Mammary epithelial cell (primary cell): ENCODE measurements at regions of chr3 and their contacts with region 1.

Region 1: DNA sequence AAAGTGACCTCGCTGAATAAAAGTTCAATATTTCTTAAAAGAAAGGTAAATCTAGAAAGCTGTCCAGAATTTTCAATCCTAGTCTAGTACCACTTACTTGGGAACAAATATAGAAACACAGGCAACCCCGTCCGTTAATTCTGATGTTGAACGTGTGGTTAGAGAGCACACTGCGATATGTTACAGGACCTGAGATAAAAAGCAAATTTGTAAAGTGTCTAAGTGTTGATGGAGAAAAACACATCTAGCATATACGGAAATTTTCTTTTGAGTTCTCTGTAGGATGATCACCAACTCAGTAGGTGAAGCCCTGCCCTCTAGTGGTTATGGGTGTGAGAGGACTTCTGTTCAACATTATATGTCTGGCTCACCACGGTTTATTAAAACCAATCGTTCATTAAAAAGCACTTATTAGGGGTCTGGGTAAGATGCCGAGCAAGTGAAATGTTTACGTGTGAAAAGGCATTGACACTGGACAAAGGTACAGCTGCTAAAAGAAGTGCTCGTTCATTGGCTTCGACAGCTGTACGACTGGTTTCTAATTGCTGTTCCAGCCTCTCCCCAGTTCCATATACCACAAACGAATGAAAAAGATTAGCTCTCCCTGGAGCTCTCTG is 1.0 kb upstream of the ATP2C1 start:
- DNase-seq: peak; percentile 74
- H3K4me3 ChIP-seq: peak overlapping the region; percentile 51 to 79 (median 77)
- H3K27ac ChIP-seq: peak overlapping the region; percentile 89
- H3K4me1 ChIP-seq: peaks cover 13% of the 10 kb centered on the region
- H3K27me3 ChIP-seq: no peaks in the 10 kb centered on the region
- CTCF ChIP-seq: peak; percentile 86 to 97

Region 2: GRCh38 chr3:130276203-130276803 is 616.6 kb before region 1 on chr3:
- CTCF ChIA-PET with region 1: no interaction called
- dilution Hi-C with region 1: no loop called
- in situ Hi-C with region 1: no loop called
- intact Hi-C with region 1: loop called (anchors 10 kb)
- DNase-seq: peak; percentile 44
- H3K4me3 ChIP-seq: no peak overlapping the region
- H3K27ac ChIP-seq: no peak overlapping the region
- H3K4me1 ChIP-seq: no peaks in the 10 kb centered on the region
- H3K27me3 ChIP-seq: peaks cover 3% of the 10 kb centered on the region
- CTCF ChIP-seq: peak; percentile 94 to 97

Region 3: DNA sequence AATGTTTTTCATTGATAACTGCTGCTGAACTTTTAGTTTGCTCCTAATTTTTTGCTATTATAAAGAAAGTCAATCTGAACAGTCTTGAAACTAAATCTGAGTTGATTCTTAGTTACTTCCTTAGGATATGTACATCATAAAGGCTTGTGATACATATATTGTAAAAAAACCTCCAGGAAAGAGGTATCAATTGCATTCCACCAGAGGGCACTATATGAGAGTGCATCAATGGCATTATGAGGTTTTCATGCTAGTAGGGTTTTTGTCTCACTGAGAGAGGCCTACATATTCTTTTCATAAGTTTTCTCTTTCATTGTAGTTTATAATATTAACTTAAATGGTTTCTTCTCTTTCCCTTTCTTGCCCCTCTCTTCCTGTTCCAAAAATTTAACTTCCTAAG is 193.1 kb before region 1 on chr3:
- CTCF ChIA-PET with region 1: no interaction called
- dilution Hi-C with region 1: no loop called
- in situ Hi-C with region 1: no loop called
- intact Hi-C with region 1: loop called (anchors 1 kb)
- DNase-seq: peak; percentile 31
- H3K4me3 ChIP-seq: no peak overlapping the region
- H3K27ac ChIP-seq: no peak overlapping the region
- H3K4me1 ChIP-seq: no peaks in the 10 kb centered on the region
- H3K27me3 ChIP-seq: no peaks in the 10 kb centered on the region
- CTCF ChIP-seq: peak; percentile 64 to 67

Region 4: DNA sequence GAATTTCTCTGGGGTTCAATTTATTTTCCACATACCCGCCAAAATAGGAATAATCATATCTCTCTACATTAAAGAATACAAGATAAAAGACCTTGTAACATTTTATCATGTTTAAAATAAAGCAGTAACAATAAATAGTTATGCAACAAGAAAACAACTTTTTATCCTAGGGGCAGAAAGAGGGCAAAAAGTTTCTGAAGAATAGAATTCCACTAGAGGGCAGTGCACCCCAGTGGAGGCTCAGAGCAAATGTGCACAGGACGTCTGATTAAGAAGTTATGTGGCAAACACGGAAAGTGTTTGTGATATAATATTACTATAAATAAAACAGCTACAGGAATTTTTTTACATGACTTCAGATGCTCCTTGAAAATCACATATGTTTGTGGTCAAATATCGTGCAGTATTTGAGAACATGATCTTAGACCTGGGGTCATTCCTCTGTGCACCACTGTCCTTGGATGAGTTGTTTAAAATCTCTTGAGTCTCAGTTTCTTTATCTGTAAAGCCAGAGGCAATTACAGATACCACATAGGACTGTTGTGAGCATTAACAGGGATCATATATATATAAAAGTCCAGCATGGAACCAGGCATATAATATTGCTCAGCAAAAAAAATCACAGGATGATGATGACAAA is 133.0 kb before region 1 on chr3:
- CTCF ChIA-PET with region 1: interaction called, 15 read pairs
- dilution Hi-C with region 1: no loop called
- in situ Hi-C with region 1: loop called (anchors 5 kb)
- intact Hi-C with region 1: loop called (anchors 1 kb)
- DNase-seq: peak; percentile 62
- H3K4me3 ChIP-seq: peak overlapping the region in 1 of 3 experiments; percentile 23
- H3K27ac ChIP-seq: peak overlapping the region; percentile 9
- H3K4me1 ChIP-seq: peaks cover 16% of the 10 kb centered on the region
- H3K27me3 ChIP-seq: no peaks in the 10 kb centered on the region
- CTCF ChIP-seq: peak; percentile 75 to 83

Region 5: GRCh38 chr3:130820976-130821375 is 71.9 kb before region 1 on chr3:
- CTCF ChIA-PET with region 1: no interaction called
- dilution Hi-C with region 1: no loop called
- in situ Hi-C with region 1: no loop called
- intact Hi-C with region 1: no loop called
- DNase-seq: peak; percentile 83
- H3K4me3 ChIP-seq: no peak overlapping the region
- H3K27ac ChIP-seq: no peak overlapping the region
- H3K4me1 ChIP-seq: peaks cover 8% of the 10 kb centered on the region
- H3K27me3 ChIP-seq: no peaks in the 10 kb centered on the region
- CTCF ChIP-seq: no peak

Region 6: DNA sequence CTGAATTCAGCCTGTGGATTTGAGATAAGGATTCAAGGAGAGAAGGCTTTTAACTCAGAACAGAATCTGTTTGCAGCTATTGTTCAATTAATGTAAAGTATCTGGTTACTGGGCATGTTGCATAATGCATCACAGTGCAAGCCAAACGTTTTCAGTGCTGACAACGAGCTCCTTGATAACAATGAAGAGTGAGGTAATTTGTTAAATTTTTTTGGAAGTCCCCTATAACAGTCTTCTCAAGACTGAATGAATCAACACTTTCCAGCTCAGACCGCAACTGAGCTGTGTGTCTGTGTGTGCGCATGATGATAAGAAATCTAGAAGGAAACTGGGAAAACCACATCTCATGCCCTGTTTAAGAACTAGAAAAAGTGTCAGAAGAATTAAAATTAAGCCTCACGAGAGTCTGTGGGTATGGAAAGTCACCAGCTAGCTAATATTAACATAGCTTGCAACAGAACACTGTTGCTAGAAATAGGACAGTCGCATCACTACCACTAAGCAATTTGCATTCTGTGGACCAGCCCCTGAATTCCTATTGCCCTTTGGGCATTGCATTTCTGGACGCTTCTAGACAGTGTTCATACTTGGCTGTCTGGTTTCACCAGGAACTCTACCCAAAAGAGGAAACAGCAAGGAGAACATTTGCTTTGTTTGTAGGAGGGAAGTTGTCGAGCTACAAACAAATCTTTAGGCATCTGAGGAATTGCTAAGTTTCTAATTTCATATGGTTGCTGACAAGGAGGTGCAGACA is 42.6 kb before region 1 on chr3:
- CTCF ChIA-PET with region 1: no interaction called
- dilution Hi-C with region 1: no loop called
- in situ Hi-C with region 1: no loop called
- intact Hi-C with region 1: loop called (anchors 2 kb)
- DNase-seq: peak; percentile 98
- H3K4me3 ChIP-seq: peak overlapping the region; percentile 29 to 50 (median 36)
- H3K27ac ChIP-seq: peak overlapping the region; percentile 98
- H3K4me1 ChIP-seq: peaks cover 31% of the 10 kb centered on the region
- H3K27me3 ChIP-seq: no peaks in the 10 kb centered on the region
- CTCF ChIP-seq: no peak

Region 7: GRCh38 chr3:130935761-130936492 is 43.1 kb after region 1 on chr3:
- CTCF ChIA-PET with region 1: no interaction called
- dilution Hi-C with region 1: no loop called
- in situ Hi-C with region 1: no loop called
- intact Hi-C with region 1: no loop called
- DNase-seq: peak; percentile 65
- H3K4me3 ChIP-seq: no peak overlapping the region
- H3K27ac ChIP-seq: no peak overlapping the region
- H3K4me1 ChIP-seq: peaks cover 10% of the 10 kb centered on the region
- H3K27me3 ChIP-seq: no peaks in the 10 kb centered on the region
- CTCF ChIP-seq: no peak

Region 8: DNA sequence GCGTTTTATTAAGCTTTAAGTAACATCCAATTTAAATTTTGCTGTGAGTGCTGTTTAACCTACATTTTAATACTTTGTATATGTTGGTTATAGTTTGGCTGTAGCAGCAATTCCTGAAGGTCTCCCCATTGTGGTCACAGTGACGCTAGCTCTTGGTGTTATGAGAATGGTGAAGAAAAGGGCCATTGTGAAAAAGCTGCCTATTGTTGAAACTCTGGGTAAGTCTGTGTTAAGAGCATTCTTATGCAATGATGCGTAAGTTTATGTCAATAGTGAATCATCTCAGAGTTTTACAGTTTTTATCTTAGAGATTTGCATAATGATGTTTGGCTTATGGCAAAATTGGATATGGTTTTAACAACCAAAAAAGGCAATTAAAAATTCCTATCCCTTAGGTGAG is 71.0 kb after region 1 on chr3:
- CTCF ChIA-PET with region 1: no interaction called
- dilution Hi-C with region 1: no loop called
- in situ Hi-C with region 1: no loop called
- intact Hi-C with region 1: loop called (anchors 2 kb)
- DNase-seq: peak; percentile 97
- H3K4me3 ChIP-seq: no peak overlapping the region
- H3K27ac ChIP-seq: peak overlapping the region; percentile 100
- H3K4me1 ChIP-seq: peaks cover 16% of the 10 kb centered on the region
- H3K27me3 ChIP-seq: no peaks in the 10 kb centered on the region
- CTCF ChIP-seq: no peak

Region 9: DNA sequence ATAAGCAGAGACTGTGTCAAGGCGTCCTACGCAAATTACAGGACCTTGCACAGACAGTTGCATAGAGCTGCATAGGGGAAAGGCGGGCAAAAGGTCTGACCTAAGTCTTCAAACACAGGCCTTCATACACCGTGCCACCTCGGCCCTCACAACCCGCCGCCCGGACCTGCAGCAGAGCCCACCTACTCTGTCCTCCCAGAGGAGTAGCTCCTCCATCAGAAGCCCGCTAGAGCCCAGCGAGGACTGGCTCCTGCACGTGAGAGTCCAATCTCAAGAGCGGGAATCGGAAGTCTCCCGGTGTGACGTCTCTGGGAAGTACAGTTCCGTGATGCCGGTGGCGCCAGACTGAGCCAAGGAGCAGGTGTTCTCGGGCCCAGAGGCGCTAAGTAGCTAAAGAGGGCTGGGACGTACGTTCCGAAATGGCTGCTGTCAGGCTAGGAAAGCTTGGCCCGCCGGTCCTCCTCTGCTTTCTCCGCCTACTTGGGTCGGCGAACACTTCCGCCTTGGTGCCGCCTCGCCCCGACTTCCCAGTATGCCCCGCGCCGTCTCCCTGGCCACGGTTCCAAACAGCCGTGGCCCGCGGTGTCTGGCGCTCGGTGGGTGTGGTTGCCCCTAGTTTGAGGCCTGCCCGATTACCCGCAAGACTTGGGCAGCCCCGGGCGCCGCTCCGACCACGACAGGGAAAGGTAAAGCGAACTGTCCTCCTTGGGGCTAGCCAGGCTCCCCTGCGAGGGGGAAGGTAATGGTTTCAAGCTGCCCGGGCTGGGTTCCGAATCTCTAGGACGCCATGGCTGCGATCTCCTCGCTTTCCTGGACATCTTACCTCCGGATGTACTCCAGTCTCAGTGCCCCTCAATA is 133.7 kb after region 1 on chr3 and contains the starts of genes ASTE1 and NEK11:
- CTCF ChIA-PET with region 1: no interaction called
- dilution Hi-C with region 1: no loop called
- in situ Hi-C with region 1: no loop called
- intact Hi-C with region 1: loop called (anchors 1 kb)
- DNase-seq: peak; percentile 87
- H3K4me3 ChIP-seq: peak within 1 kb of the TSS; percentile 68 to 81 (median 78)
- H3K27ac ChIP-seq: peak within 1 kb of the TSS; percentile 97
- H3K4me1 ChIP-seq: peaks cover 4% of the 10 kb centered on the region
- H3K27me3 ChIP-seq: no peaks in the 10 kb centered on the region
- CTCF ChIP-seq: peak in 1 of 2 donors; percentile 4
- total RNA-seq, gene ASTE1: 4.4 to 6.3 TPM
- total RNA-seq, gene NEK11: 7.7 to 20.2 TPM